ENCODE measurements at regions of chr15 and their contacts with region 1.

Region 1: DNA sequence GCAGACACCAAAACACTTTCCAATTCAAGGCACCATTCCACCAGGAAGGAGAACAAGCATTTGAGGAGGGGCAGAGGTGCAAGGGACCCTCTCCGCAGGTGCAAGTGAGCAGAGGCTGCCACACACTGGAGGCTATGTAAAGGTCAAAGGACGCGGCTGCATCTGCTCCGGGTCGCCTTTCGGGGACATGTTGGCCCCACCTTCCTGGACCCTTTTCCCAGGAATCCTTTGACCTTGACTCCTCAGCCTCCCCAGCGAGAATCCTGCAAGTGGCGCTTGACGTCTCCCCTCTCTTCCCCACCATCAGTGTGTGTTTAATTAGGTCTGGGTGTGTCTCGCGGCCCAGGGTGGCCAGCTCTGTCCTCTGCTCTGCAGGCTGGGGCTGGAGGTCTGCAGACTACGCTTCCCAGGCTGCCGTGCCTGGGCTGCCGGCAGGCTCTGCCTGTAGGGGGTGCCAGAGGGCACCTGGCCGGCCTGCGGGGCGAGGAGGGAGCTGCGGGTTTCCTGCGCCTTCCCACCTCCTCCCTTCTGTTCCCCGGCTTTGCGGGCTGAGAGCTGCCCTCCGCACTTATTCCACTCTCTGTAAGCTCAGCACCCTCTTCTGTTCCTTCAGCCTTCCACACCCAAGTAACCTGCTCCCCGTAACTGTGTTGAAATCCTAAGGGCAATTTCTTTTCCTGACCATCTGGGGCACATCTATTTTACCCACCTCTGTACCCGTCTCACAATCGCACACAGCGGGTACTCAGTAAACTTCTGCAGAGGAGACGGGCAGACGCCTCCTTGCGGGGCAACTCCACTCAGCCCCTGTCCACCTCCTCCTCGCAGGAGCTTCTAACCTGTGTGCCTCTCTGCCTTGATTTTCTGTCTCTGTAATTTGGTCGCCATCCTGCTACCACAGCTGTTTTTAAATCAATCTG is 129.8 kb downstream of the NSMCE3 start:
- DNase-seq: peak; percentile 89
- ATAC-seq: peak; percentile 93
- H3K4me3 Mint-ChIP-seq: peak overlapping the region; percentile 75
- H3K27ac Mint-ChIP-seq: peak overlapping the region; percentile 29
- H3K4me1 Mint-ChIP-seq: peaks cover 28% of the 10 kb centered on the region
- H3K27me3 Mint-ChIP-seq: no peaks in the 10 kb centered on the region
- CTCF ChIP-seq: peak; percentile 87

Region 2: GRCh38 chr15:29124581-29125381 is 15.0 kb before region 1 on chr15:
- CTCF ChIA-PET with region 1: interaction called, 70 read pairs
- POLR2A ChIA-PET with region 1: no interaction called
- DNase-seq: no peak
- ATAC-seq: peak; percentile 20; the same call in 1 of the 2 replicates
- H3K4me3 Mint-ChIP-seq: no peak overlapping the region
- H3K27ac Mint-ChIP-seq: no peak overlapping the region
- H3K4me1 Mint-ChIP-seq: peaks cover 12% of the 10 kb centered on the region
- H3K27me3 Mint-ChIP-seq: no peaks in the 10 kb centered on the region; the same call in 1 of the 2 replicates
- CTCF ChIP-seq: no peak

Region 3: GRCh38 chr15:29196290-29196689 is 56.5 kb after region 1 on chr15:
- CTCF ChIA-PET with region 1: interaction called, 26 read pairs
- POLR2A ChIA-PET with region 1: no interaction called
- DNase-seq: peak; percentile 69
- ATAC-seq: peak; percentile 78
- H3K4me3 Mint-ChIP-seq: peak overlapping the region; percentile 37
- H3K27ac Mint-ChIP-seq: peak overlapping the region; percentile 47
- H3K4me1 Mint-ChIP-seq: peaks cover 34% of the 10 kb centered on the region
- H3K27me3 Mint-ChIP-seq: no peaks in the 10 kb centered on the region
- CTCF ChIP-seq: no peak

Region 4: GRCh38 chr15:29345549-29346525 is 206.0 kb after region 1 on chr15:
- CTCF ChIA-PET with region 1: interaction called, 39 read pairs
- POLR2A ChIA-PET with region 1: no interaction called
- DNase-seq: peak; percentile 74
- ATAC-seq: peak; percentile 91
- H3K4me3 Mint-ChIP-seq: peak overlapping the region; percentile 63
- H3K27ac Mint-ChIP-seq: peak overlapping the region; percentile 88
- H3K4me1 Mint-ChIP-seq: peaks cover 74% of the 10 kb centered on the region
- H3K27me3 Mint-ChIP-seq: no peaks in the 10 kb centered on the region
- CTCF ChIP-seq: no peak

Region 5: GRCh38 chr15:29420188-29420587 is 280.4 kb after region 1 on chr15:
- CTCF ChIA-PET with region 1: interaction called, 11 read pairs
- POLR2A ChIA-PET with region 1: no interaction called
- DNase-seq: peak; percentile 46
- ATAC-seq: peak; percentile 36; the same call in 1 of the 2 replicates
- H3K4me3 Mint-ChIP-seq: no peak overlapping the region
- H3K27ac Mint-ChIP-seq: peak overlapping the region; percentile 8; the same call in 1 of the 2 replicates
- H3K4me1 Mint-ChIP-seq: peaks cover 25% of the 10 kb centered on the region
- H3K27me3 Mint-ChIP-seq: no peaks in the 10 kb centered on the region; the same call in 1 of the 2 replicates
- CTCF ChIP-seq: no peak

Region 6: GRCh38 chr15:29568838-29569532 is 429.2 kb after region 1 on chr15:
- CTCF ChIA-PET with region 1: interaction called, 26 read pairs
- POLR2A ChIA-PET with region 1: no interaction called
- DNase-seq: peak; percentile 53
- ATAC-seq: peak; percentile 65
- H3K4me3 Mint-ChIP-seq: peak overlapping the region; percentile 75
- H3K27ac Mint-ChIP-seq: no peak overlapping the region
- H3K4me1 Mint-ChIP-seq: peaks cover 34% of the 10 kb centered on the region
- H3K27me3 Mint-ChIP-seq: peaks cover 37% of the 10 kb centered on the region
- CTCF ChIP-seq: no peak